Vagina (tissue), 2 donors: ENCODE measurements at regions of chr7 and their contacts with region 1.

Region 1: GRCh38 chr7:137667633-137668387 is 179.0 kb downstream of the DGKI start:
- DNase-seq: no peak
- H3K4me3 ChIP-seq: no peak overlapping the region
- H3K27ac ChIP-seq: no peak overlapping the region
- H3K4me1 ChIP-seq: no peaks in the 10 kb centered on the region
- H3K27me3 ChIP-seq: no peaks in the 10 kb centered on the region
- CTCF ChIP-seq: no peak
- POLR2A ChIP-seq: no peak

Region 2: DNA sequence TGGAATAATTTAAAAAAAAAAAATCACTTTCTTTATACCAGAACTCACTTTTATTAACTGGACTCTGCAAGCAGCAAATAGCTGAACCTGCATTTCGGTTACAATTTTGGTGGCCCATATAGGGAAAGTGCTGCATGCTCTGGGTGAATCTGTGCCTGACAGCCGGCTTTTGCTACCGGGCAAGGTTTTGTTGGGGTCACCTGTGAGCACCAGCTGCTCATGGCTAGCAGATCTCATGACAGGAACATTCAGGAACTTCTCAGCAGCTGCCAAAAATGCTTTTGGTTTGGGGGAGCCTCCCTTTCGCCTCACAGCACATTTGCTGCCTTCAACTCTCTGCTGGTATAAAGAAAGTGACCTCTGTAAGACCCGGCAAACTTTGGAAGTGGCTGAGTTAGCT is 347.3 kb after region 1 on chr7:
- intact Hi-C with region 1: loop called (anchors 5 kb)
- DNase-seq: no peak
- H3K4me3 ChIP-seq: no peak overlapping the region
- H3K27ac ChIP-seq: no peak overlapping the region
- H3K4me1 ChIP-seq: no peaks in the 10 kb centered on the region
- H3K27me3 ChIP-seq: no peaks in the 10 kb centered on the region
- CTCF ChIP-seq: no peak
- POLR2A ChIP-seq: no peak